ENCODE measurements at regions of chr6 and their contacts with region 1.

Region 1: DNA sequence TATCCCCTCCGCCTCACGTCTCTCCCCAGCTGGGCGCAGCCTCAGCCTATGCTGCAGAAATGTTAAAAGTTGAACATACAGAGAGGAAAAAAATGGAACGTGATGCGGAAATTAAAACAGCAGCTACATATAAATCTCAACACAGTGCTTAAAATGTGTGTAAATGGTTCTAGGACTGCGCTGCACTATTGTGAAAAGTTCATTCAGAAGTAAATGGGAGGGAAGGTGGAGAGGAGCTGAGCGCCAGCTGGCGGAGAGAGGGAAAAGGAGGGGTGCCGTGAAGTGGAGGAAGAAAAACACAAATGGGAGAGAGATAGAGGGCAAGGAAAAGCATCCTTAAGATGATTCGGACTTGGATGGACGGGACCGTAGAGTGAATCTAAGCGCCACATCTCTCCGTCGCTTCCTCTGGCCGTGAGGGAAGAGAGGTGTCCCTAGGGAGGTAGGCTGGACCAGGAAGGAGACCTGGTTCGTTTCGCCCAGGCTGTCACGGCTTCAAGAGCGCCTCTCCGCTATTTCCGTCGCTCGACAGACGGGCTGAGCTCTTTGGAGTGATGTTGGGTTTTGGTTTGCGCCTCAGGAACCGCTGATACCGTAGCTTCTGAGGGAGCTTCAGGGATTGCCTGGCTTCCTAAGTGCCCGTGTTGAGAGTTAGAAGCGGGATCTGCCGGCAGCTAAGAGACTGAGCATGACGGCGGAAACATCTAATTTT is 113.7 kb downstream of the TRIM27 start:
- DNase-seq: no peak
- H3K4me3 Mint-ChIP-seq: peak overlapping the region; percentile 31
- H3K27ac Mint-ChIP-seq: no peak overlapping the region
- H3K4me1 Mint-ChIP-seq: peaks cover 10% of the 10 kb centered on the region
- H3K27me3 Mint-ChIP-seq: peaks cover 81% of the 10 kb centered on the region

Region 2: DNA sequence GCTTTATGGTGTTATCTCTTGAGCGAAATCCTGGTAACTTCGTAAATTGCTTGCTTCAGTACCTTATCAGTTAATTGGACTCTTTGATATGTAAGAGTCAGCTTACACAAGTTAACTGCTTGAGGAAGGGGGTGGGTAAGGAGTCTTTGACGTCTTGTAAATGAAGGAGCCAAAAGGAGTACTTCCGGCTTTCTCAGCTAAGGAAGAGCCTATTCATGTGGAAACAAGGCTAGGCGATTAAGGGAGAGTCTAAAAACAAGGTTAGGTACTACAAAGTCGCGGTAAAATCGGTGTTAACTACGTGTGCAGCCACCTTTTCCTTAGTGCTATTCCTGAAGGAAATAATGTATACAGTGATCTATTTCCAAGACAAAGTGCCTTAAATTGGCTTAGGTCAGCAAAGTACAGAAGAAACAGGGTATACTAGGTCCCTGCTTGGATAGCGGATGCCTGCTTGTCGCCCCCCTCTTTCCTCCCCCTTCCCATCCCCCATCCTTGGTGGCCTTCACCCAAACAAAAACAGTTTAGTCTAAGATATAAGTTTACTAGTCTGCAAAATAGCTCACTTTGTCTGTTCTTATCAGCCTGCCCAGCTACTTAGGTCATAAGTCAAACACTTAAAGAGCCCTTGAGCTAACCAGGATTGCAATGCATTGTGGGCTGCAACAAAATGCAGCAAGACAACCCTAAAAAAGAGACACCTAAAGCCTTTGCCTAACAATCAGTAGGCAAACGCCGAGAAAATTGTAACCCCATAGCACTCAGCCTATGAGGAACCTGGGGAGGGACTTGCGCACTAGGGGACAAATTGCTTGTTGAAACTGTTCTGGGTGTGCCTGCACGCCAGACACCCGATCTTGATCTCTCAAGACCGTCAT is 33.6 kb before region 1 on chr6:
- CTCF ChIA-PET with region 1: no interaction called
- POLR2A ChIA-PET with region 1: no interaction called
- intact Hi-C with region 1: loop called (anchors 5 kb)
- DNase-seq: no peak
- H3K4me3 Mint-ChIP-seq: no peak overlapping the region
- H3K27ac Mint-ChIP-seq: no peak overlapping the region
- H3K4me1 Mint-ChIP-seq: peaks cover 10% of the 10 kb centered on the region
- H3K27me3 Mint-ChIP-seq: peaks cover 86% of the 10 kb centered on the region

Measured in activated CD4-positive, alpha-beta memory T cell treated with anti-CD3 and anti-CD28 coated beads for 36 hours (primary cell).